CD4-positive, alpha-beta T cell (primary cell): ENCODE measurements at regions of chr6 and their contacts with region 1.

Region 1: DNA sequence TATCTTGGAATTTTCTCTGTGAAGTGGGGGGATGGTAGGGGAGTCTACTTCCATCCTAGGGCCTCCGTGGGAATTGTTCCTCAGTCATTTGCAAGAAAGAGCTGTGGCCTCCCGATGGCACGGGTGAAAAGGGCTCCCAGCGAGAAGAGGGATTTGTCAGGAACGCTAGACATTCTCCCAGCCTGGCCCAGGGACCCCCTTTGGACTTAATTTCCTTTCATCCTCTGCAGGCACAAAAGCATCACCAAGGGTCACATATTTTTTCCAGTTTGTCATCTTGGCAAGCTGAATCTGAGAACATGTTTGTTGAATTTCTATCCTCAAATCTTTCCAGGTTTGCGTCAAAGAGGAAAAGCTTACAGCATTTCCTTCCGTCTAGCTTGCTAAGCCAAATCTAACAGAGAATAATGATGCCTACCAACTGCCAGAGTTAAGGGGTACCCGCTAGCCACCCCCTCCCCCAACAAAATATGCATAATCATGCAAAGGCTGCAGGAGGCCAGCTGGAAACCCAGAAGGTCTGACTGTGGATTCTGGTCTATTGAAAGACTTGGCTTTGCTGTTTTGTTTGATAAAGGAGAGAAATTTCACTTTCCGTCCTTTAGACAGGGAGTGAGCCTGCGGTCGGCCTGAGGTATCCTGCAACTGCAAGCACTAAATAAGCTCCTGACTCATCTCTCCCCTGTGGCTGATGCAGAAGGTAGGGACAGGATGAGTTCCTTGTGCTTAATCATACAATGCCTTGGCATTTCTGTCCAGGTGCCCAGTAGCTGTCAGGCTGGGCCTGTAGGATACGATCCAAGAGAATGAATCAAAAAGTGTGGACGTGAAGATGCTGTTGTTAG is 23.1 kb downstream of the PSMG4 start:
- DNase-seq: peak in 1 of 14 experiments; percentile 21
- ATAC-seq: no peak
- H3K4me3 ChIP-seq: no peak overlapping the region
- H3K4me3 Mint-ChIP-seq: no peak overlapping the region
- H3K27ac ChIP-seq: no peak overlapping the region
- H3K27ac Mint-ChIP-seq: no peak overlapping the region
- H3K4me1 ChIP-seq: no peaks in the 10 kb centered on the region
- H3K4me1 Mint-ChIP-seq: peaks cover 5% of the 10 kb centered on the region
- H3K27me3 ChIP-seq: no peaks in the 10 kb centered on the region
- H3K27me3 Mint-ChIP-seq: no peaks in the 10 kb centered on the region
- CTCF ChIP-seq: no peak

Region 2: DNA sequence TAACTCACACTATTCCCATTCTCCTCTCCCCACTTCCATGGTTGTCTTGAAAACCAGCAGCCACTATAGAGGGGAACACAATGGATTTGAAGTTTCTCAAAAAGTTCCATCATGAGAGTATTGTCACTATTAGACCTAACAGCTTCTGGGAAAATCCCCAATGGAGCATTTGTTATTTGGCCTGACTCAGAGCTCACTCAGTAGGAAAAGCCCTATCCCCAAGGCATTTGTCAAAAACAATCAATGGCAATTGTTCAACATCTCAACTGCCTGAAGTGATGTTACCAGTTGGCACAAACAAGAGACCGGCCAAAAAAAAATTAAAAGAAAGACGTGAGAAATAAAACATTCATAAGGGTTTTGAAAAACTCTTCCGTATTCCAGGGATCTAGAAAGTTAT is 629.9 kb before region 1 on chr6:
- CTCF ChIA-PET with region 1: no interaction called
- POLR2A ChIA-PET with region 1: no interaction called
- intact Hi-C with region 1: no loop called
- DNase-seq: peak in 2 of 14 experiments; percentile 19 to 30
- ATAC-seq: no peak
- H3K4me3 ChIP-seq: no peak overlapping the region
- H3K4me3 Mint-ChIP-seq: no peak overlapping the region
- H3K27ac ChIP-seq: no peak overlapping the region
- H3K27ac Mint-ChIP-seq: no peak overlapping the region
- H3K4me1 ChIP-seq: no peaks in the 10 kb centered on the region
- H3K4me1 Mint-ChIP-seq: no peaks in the 10 kb centered on the region
- H3K27me3 ChIP-seq: peaks cover 5 to 14% of the 10 kb centered on the region in 2 experiments
- H3K27me3 Mint-ChIP-seq: peaks cover 13% of the 10 kb centered on the region
- CTCF ChIP-seq: no peak

Region 3: DNA sequence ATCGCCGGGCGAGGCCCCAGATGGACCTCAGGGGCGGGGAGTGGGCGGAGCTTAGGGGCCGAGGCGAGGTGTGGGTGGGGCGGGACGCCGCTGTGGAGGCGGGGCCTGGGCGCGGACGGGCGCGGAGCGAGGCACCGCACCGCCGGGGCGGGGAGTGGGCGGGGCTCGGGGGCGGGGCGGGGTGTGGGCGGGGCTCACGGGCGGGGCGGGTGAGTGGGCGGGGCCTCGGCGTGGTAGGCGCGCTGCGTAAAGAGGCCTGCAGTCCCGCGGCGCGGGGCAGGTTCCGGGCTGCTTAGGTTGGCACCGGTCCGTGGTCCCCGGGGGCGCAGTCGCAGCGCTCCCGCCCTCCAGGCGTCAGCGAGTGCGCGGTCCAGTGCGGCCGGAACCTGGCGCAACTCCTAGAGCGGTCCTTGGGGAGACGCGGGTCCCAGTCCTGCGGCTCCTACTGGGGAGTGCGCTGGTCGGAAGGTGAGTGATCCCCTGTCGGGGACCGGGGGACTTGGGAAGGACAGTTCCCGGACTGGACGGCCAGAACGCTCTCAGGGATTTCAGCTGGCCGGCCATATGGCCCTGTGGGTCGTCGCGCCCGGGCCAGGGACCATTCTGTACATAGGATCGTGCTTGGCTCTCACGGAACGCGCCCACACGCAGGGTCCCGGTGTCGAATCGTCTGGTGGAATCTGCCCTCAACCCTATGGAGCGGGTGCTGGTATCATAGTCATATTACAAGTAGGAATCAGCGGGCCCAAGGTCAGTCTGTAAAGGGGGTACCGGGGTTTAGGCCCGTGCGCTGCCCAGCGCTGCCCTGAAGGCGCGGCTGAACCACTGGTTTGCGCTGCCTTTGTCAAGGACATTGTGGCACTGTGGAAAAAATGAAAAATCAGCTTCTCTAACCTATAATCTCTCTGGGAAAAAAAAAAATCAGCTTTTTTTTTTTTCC is 282.0 kb before region 1 on chr6 and contains the start of gene NQO2:
- CTCF ChIA-PET with region 1: no interaction called
- POLR2A ChIA-PET with region 1: no interaction called
- intact Hi-C with region 1: no loop called
- DNase-seq: peak; percentile 82 to 96 (median 90)
- ATAC-seq: peak; percentile 69
- H3K4me3 ChIP-seq: peak within 1 kb of the TSS; percentile 93
- H3K4me3 Mint-ChIP-seq: peak within 1 kb of the TSS; percentile 93
- H3K27ac ChIP-seq: peak within 1 kb of the TSS; percentile 69 to 76
- H3K27ac Mint-ChIP-seq: peak within 1 kb of the TSS; percentile 93
- H3K4me1 ChIP-seq: peaks cover 32% of the 10 kb centered on the region
- H3K4me1 Mint-ChIP-seq: peaks cover 31% of the 10 kb centered on the region
- H3K27me3 ChIP-seq: no peaks in the 10 kb centered on the region
- H3K27me3 Mint-ChIP-seq: no peaks in the 10 kb centered on the region
- CTCF ChIP-seq: no peak
- total RNA-seq, gene NQO2: 6.7 to 7.7 TPM

Region 4: DNA sequence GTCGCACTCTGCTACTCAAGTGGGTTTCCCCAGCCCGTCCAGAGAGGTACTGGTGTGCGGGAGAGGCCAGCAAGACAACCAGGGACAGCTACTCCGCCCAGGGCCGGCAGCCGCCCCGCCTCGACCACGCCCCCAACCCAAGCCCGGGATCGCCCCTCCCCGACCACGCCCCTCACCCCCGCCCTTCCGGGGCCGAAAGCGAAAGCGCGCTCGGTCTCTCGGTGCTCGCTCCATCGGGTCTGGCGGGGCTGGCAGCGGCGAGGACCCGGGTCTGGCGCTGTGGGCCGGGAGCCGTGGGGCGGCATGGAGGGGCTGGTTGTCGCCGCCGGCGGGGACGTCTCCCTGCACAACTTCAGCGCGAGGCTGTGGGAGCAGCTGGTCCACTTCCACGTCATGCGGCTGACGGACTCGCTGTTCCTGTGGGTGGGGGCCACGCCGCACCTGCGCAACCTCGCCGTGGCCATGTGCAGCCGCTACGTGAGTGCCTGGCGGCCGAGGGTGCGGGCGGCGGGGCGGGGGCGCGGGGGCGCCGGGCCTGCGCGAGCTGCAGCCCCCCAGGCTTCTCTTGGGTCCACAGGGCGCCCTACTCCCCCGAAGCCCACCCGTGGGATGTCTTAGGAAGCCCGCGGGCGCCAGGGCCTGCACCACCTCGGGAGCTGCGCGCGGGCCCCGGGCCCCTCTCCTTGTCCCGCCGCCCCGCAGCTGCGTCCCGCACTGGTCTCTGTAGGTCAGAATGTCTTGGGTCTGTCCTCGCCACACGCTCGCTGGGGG is 22.9 kb before region 1 on chr6 and contains the start of gene PSMG4:
- CTCF ChIA-PET with region 1: no interaction called
- POLR2A ChIA-PET with region 1: no interaction called
- intact Hi-C with region 1: no loop called
- DNase-seq: peak; percentile 83 to 96 (median 92)
- ATAC-seq: peak; percentile 74
- H3K4me3 ChIP-seq: peak within 1 kb of the TSS; percentile 80
- H3K4me3 Mint-ChIP-seq: peak within 1 kb of the TSS; percentile 96
- H3K27ac ChIP-seq: peak within 1 kb of the TSS in 1 of 2 donors; percentile 50
- H3K27ac Mint-ChIP-seq: peak within 1 kb of the TSS; percentile 92
- H3K4me1 ChIP-seq: peaks cover 45% of the 10 kb centered on the region
- H3K4me1 Mint-ChIP-seq: peaks cover 42% of the 10 kb centered on the region
- H3K27me3 ChIP-seq: no peaks in the 10 kb centered on the region
- H3K27me3 Mint-ChIP-seq: no peaks in the 10 kb centered on the region
- CTCF ChIP-seq: no peak
- total RNA-seq, gene PSMG4: 12.3 to 12.8 TPM

Region 5: DNA sequence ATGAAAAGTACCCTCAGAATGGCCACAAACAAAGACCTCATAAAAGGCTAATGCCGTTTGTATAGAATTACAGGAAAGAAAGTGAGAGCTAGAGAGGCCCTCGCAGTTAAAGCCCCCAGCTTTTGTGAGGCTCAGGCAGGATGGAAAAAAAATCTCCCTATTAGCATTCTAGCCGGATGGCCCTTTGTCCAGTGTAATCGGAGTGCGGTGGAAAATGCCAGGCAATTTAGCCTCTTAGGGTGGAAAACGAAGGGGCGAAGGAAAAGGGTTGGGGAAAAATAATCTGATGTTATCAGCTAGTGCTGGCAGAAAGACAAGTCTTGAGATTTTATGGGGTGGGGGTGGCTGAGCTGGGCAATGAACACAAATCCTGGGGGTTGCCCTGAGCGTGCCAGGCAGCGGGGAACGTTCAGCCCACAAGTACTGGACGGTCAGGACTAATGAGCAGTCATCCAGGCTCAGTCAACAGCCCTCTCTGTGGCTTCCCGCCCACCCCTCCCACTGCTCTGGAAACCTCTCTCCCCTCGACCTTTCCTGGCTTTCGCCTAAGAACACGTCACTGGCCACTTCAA is 69.3 kb after region 1 on chr6:
- CTCF ChIA-PET with region 1: no interaction called
- POLR2A ChIA-PET with region 1: no interaction called
- intact Hi-C with region 1: loop called in 1 of 2 experiments (anchors 5 kb)
- DNase-seq: no peak
- ATAC-seq: no peak
- H3K4me3 ChIP-seq: no peak overlapping the region
- H3K4me3 Mint-ChIP-seq: no peak overlapping the region
- H3K27ac ChIP-seq: no peak overlapping the region
- H3K27ac Mint-ChIP-seq: no peak overlapping the region
- H3K4me1 ChIP-seq: peaks cover 25% of the 10 kb centered on the region
- H3K4me1 Mint-ChIP-seq: peaks cover 32% of the 10 kb centered on the region
- H3K27me3 ChIP-seq: no peaks in the 10 kb centered on the region
- H3K27me3 Mint-ChIP-seq: no peaks in the 10 kb centered on the region
- CTCF ChIP-seq: no peak

Region 6: GRCh38 chr6:3456755-3457466 is 175.1 kb after region 1 on chr6 and contains the start of gene SLC22A23:
- CTCF ChIA-PET with region 1: no interaction called
- POLR2A ChIA-PET with region 1: interaction called, 3 read pairs
- intact Hi-C with region 1: loop called (anchors 1 to 2 kb)
- DNase-seq: peak; percentile 63 to 91 (median 77)
- ATAC-seq: peak; percentile 52
- H3K4me3 ChIP-seq: peak within 1 kb of the TSS; percentile 72
- H3K4me3 Mint-ChIP-seq: peak within 1 kb of the TSS; percentile 89
- H3K27ac ChIP-seq: no peak within 1 kb of the TSS
- H3K27ac Mint-ChIP-seq: peak within 1 kb of the TSS; percentile 63
- H3K4me1 ChIP-seq: peaks cover 36% of the 10 kb centered on the region
- H3K4me1 Mint-ChIP-seq: peaks cover 7% of the 10 kb centered on the region
- H3K27me3 ChIP-seq: peaks cover 6 to 15% of the 10 kb centered on the region in 2 experiments
- H3K27me3 Mint-ChIP-seq: peaks cover 15% of the 10 kb centered on the region
- CTCF ChIP-seq: peak; percentile 79
- total RNA-seq, gene SLC22A23: 13.4 to 13.6 TPM

Region 7: GRCh38 chr6:3732345-3733141 is 450.7 kb after region 1 on chr6:
- CTCF ChIA-PET with region 1: interaction called, 56 read pairs
- POLR2A ChIA-PET with region 1: interaction called, 5 read pairs
- intact Hi-C with region 1: loop called (anchors 1 kb)
- DNase-seq: peak; percentile 40 to 80 (median 58)
- ATAC-seq: peak; percentile 78
- H3K4me3 ChIP-seq: no peak overlapping the region
- H3K4me3 Mint-ChIP-seq: no peak overlapping the region
- H3K27ac ChIP-seq: no peak overlapping the region
- H3K27ac Mint-ChIP-seq: no peak overlapping the region
- H3K4me1 ChIP-seq: peaks cover 5% of the 10 kb centered on the region
- H3K4me1 Mint-ChIP-seq: no peaks in the 10 kb centered on the region
- H3K27me3 ChIP-seq: peaks cover 0 to 2% of the 10 kb centered on the region in 2 experiments
- H3K27me3 Mint-ChIP-seq: peaks cover 37% of the 10 kb centered on the region
- CTCF ChIP-seq: peak; percentile 92

Region 8: DNA sequence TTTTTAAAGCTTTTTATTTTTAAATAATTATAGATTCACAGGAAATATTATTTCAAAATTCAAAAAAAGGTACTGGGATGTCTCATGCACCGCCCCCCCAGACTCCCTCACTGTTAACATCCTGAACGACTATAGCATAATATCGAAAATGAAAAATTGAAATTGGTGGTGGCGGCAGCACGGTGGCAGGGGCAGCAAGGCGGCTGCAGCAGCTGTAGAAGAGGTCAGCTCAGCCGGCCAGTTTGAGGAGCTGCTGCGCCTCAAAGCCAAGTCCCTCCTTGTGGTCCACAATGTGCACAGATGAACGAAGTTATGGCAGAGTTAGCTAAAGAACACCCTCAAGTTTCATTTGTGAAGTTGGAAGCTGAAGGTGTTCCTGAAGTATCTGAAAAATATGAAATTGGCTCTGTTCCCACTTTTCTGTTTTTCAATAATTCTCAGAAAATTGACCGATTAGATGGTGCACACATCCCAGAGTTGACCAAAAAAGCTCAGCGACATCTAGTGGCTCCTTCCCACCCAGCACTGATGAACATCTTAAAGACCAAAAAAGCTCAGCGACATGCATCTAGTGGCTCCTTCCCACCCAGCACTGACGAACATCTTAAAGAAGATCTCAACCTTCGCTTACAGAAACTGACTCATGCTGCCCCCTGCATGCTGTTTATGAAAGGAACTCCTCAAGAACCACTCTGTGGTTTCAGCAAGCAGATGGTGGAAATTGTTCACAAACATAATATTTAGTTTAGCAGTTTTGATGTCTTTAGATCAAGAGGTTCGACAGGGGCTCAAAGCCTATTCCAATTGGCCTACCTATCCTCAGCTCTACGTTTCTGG is 696.2 kb after region 1 on chr6:
- CTCF ChIA-PET with region 1: interaction called, 8 read pairs
- POLR2A ChIA-PET with region 1: no interaction called
- intact Hi-C with region 1: loop called in 1 of 2 experiments (anchors 5 kb)
- DNase-seq: peak; percentile 6 to 84 (median 31)
- ATAC-seq: peak; percentile 100
- H3K4me3 ChIP-seq: no peak overlapping the region
- H3K4me3 Mint-ChIP-seq: no peak overlapping the region
- H3K27ac ChIP-seq: no peak overlapping the region
- H3K27ac Mint-ChIP-seq: no peak overlapping the region
- H3K4me1 ChIP-seq: peaks cover 8% of the 10 kb centered on the region
- H3K4me1 Mint-ChIP-seq: peaks cover 17% of the 10 kb centered on the region
- H3K27me3 ChIP-seq: no peaks in the 10 kb centered on the region
- H3K27me3 Mint-ChIP-seq: no peaks in the 10 kb centered on the region
- CTCF ChIP-seq: peak; percentile 73

Region 9: GRCh38 chr6:4155848-4156466 is 874.1 kb after region 1 on chr6:
- CTCF ChIA-PET with region 1: interaction called, 3 read pairs
- POLR2A ChIA-PET with region 1: no interaction called
- intact Hi-C with region 1: loop called in 1 of 2 experiments (anchors 5 kb)
- DNase-seq: peak; percentile 57 to 91 (median 72)
- ATAC-seq: peak; percentile 99
- H3K4me3 ChIP-seq: no peak overlapping the region
- H3K4me3 Mint-ChIP-seq: no peak overlapping the region
- H3K27ac ChIP-seq: no peak overlapping the region
- H3K27ac Mint-ChIP-seq: no peak overlapping the region
- H3K4me1 ChIP-seq: no peaks in the 10 kb centered on the region
- H3K4me1 Mint-ChIP-seq: peaks cover 5% of the 10 kb centered on the region
- H3K27me3 ChIP-seq: no peaks in the 10 kb centered on the region
- H3K27me3 Mint-ChIP-seq: peaks cover 15% of the 10 kb centered on the region
- CTCF ChIP-seq: peak; percentile 86